Tibial artery (tissue), 4 donors: ENCODE measurements at regions of chr5 and their contacts with region 1.

Region 1: GRCh38 chr5:157575381-157576020 is at the start of gene ADAM19:
- DNase-seq: peak; percentile 66 to 76
- H3K4me3 ChIP-seq: peak within 1 kb of the TSS; percentile 80 to 84
- H3K27ac ChIP-seq: peak within 1 kb of the TSS; percentile 83 to 86
- H3K4me1 ChIP-seq: peaks cover 0 to 40% (median 17%) of the 10 kb centered on the region in 4 donors
- H3K27me3 ChIP-seq: no peaks in the 10 kb centered on the region
- CTCF ChIP-seq: peak in 1 of 2 experiments; percentile 20

Region 2: GRCh38 chr5:157150995-157151394 is 424.5 kb before region 1 on chr5:
- intact Hi-C with region 1: no loop called
- DNase-seq: no peak
- H3K4me3 ChIP-seq: no peak overlapping the region
- H3K27ac ChIP-seq: no peak overlapping the region
- H3K4me1 ChIP-seq: peaks cover 0 to 15% (median 3%) of the 10 kb centered on the region in 4 donors
- H3K27me3 ChIP-seq: no peaks in the 10 kb centered on the region
- CTCF ChIP-seq: no peak

Region 3: GRCh38 chr5:157390551-157391297 is 184.8 kb before region 1 on chr5:
- intact Hi-C with region 1: loop called (anchors 10 kb)
- DNase-seq: no peak
- H3K4me3 ChIP-seq: no peak overlapping the region
- H3K27ac ChIP-seq: peak overlapping the region; percentile 44 to 60
- H3K4me1 ChIP-seq: peaks cover 0 to 60% (median 26%) of the 10 kb centered on the region in 4 donors
- H3K27me3 ChIP-seq: no peaks in the 10 kb centered on the region
- CTCF ChIP-seq: no peak

Region 4: GRCh38 chr5:157506981-157507780 is 68.3 kb before region 1 on chr5:
- intact Hi-C with region 1: loop called (anchors 5 kb)
- DNase-seq: peak in 1 of 2 donors; percentile 64
- H3K4me3 ChIP-seq: no peak overlapping the region
- H3K27ac ChIP-seq: no peak overlapping the region
- H3K4me1 ChIP-seq: peaks cover 0 to 16% (median 13%) of the 10 kb centered on the region in 4 donors
- H3K27me3 ChIP-seq: no peaks in the 10 kb centered on the region
- CTCF ChIP-seq: no peak

Region 5: DNA sequence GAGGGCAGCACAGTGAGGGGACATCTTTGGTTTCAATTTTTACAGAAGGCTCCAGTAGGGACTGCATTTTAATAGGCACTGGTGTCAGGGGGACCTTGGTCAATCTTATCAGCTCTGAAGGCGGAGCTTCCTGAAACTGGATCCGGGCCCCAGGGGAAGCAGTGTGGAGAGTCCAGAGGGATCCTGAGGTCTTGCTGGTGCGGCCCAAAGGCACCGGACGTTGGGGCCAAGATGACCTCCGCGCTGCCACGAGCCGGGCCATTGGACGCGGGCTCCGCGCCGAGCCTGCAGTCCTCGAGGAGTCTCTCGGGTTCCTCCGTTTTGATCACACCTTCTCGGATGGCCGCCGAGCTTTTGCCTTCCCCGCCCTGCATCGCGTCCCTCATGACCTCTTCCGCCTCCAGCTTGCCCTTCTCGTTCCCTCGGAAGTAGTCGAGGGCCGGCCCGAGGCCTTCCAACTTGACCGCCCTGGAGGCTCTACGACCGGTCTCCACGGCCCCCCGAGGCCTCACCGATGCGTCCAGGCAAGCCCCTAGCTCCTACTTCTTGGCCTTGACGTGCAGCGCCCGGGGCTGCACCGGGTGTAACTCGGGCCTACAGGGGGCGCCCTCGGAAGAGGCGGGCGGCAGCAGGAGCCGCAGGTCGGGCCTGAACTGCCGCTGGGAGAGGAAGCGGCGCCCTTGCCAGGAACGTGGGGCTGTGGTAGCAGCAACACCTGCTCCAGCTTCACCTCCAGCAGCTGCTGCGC is 114.6 kb after region 1 on chr5:
- intact Hi-C with region 1: no loop called
- DNase-seq: no peak
- H3K4me3 ChIP-seq: no peak overlapping the region
- H3K27ac ChIP-seq: no peak overlapping the region
- H3K4me1 ChIP-seq: no peaks in the 10 kb centered on the region
- H3K27me3 ChIP-seq: no peaks in the 10 kb centered on the region
- CTCF ChIP-seq: no peak